A549 (cell line): ENCODE measurements at regions of chr4 and their contacts with region 1.

Region 1: DNA sequence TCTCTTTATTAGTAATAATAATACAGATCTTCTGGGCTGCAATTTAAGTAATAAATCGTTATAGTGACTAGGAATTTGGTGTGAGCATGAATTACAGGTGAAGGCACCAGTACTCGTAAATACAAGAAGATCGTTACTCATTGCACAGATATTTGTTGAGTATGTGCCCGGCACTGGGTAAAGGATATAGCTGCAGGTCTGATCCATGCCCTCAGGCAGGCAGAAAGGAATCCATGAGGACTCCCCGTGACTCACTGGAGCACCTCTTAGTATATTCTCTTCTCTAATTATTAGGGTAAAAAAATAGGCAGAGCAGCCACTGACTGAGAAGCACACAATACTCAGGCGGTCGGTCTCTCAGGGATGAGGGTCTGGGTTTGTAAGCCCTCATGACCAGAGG is 868.3 kb downstream of the RAB28 start:
- DNase-seq: no peak
- ATAC-seq: no peak
- H3K4me3 ChIP-seq: no peak overlapping the region
- H3K27ac ChIP-seq: no peak overlapping the region
- H3K4me1 ChIP-seq: no peaks in the 10 kb centered on the region
- CTCF ChIP-seq: no peak
- EP300 ChIP-seq: no peak
- POLR2A ChIP-seq: no peak
- RAD21 ChIP-seq: no peak

Region 2: GRCh38 chr4:12633053-12633651 is 17.3 kb after region 1 on chr4:
- CTCF ChIA-PET with region 1: interaction called, 12 read pairs
- POLR2A ChIA-PET with region 1: no interaction called
- DNase-seq: peak; percentile 21 to 66
- ATAC-seq: peak; percentile 73 to 81; a peak in 5 of 6 replicates
- H3K4me3 ChIP-seq: no peak overlapping the region
- H3K27ac ChIP-seq: no peak overlapping the region
- H3K4me1 ChIP-seq: no peaks in the 10 kb centered on the region
- CTCF ChIP-seq: peak; percentile 64
- EP300 ChIP-seq: no peak
- POLR2A ChIP-seq: no peak
- RAD21 ChIP-seq: peak; percentile 74 to 82; a peak in 4 of 5 replicates